CD4-positive, alpha-beta T cell (primary cell): ENCODE measurements at regions of chr18 and their contacts with region 1.

Region 1: GRCh38 chr18:712401-713134 is at the start of gene ENOSF1:
- DNase-seq: peak; percentile 55 to 91 (median 73)
- ATAC-seq: peak; percentile 73
- H3K4me3 ChIP-seq: peak within 1 kb of the TSS; percentile 78
- H3K4me3 Mint-ChIP-seq: peak within 1 kb of the TSS; percentile 95
- H3K27ac ChIP-seq: peak within 1 kb of the TSS; percentile 71 to 81
- H3K27ac Mint-ChIP-seq: peak within 1 kb of the TSS; percentile 92
- H3K4me1 ChIP-seq: peaks cover 27% of the 10 kb centered on the region
- H3K4me1 Mint-ChIP-seq: peaks cover 38% of the 10 kb centered on the region
- H3K27me3 ChIP-seq: no peaks in the 10 kb centered on the region
- H3K27me3 Mint-ChIP-seq: no peaks in the 10 kb centered on the region
- CTCF ChIP-seq: peak; percentile 49
- total RNA-seq, gene ENOSF1: 37.8 to 40.1 TPM

Region 2: GRCh38 chr18:596288-596881 is 116.2 kb before region 1 on chr18:
- CTCF ChIA-PET with region 1: no interaction called
- POLR2A ChIA-PET with region 1: no interaction called
- intact Hi-C with region 1: loop called in 1 of 2 experiments (anchors 1 kb)
- DNase-seq: peak in 3 of 14 experiments; percentile 68 to 84 (median 83)
- ATAC-seq: peak; percentile 69
- H3K4me3 ChIP-seq: no peak overlapping the region
- H3K4me3 Mint-ChIP-seq: peak overlapping the region; percentile 42
- H3K27ac ChIP-seq: no peak overlapping the region
- H3K27ac Mint-ChIP-seq: no peak overlapping the region
- H3K4me1 ChIP-seq: peaks cover 13% of the 10 kb centered on the region
- H3K4me1 Mint-ChIP-seq: peaks cover 10% of the 10 kb centered on the region
- H3K27me3 ChIP-seq: peaks cover 3 to 28% of the 10 kb centered on the region in 2 experiments
- H3K27me3 Mint-ChIP-seq: peaks cover 55% of the 10 kb centered on the region
- CTCF ChIP-seq: no peak

Region 3: DNA sequence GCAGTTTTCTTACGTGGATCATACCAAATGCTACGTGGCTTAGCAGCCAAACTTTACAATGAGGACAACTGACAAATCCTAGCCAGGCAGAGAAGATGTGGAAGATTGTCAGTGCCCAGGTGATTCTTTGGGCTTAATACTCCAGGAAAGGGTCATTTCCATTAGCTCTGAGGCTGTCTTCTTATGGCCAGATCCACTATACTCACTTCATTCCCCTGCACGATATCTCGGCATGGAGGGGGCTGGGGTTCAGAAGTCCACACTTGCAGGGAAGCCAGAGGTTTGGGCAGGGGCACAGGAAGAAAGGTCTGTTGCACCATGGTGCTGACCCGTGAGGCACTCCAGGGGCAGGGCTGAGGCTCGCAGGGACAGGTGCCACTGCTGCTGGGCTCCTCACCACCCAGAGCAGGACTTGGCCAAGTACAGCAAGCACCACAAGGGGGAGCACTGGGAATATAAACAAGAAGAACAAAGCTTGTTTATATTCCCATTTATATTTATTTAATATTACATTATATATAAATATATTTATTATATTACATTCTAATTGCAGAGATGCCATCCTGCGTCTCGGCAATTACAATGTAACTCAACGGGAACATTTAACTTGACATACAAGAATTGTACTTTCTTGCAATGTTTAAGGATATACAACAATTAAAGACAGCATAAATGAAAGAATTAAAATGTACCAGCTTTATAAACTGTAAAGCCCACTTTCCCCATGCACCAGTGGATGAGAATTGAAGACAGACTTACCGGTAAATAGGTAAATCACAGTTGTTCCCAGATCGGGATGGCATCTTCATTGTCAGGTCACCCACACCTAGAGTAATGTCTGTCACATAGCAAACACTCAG is 88.6 kb before region 1 on chr18:
- CTCF ChIA-PET with region 1: interaction called, 5 read pairs
- POLR2A ChIA-PET with region 1: no interaction called
- intact Hi-C with region 1: loop called in 1 of 2 experiments (anchors 5 kb)
- DNase-seq: peak; percentile 23 to 74 (median 44)
- ATAC-seq: peak; percentile 73
- H3K4me3 ChIP-seq: no peak overlapping the region
- H3K4me3 Mint-ChIP-seq: no peak overlapping the region
- H3K27ac ChIP-seq: no peak overlapping the region
- H3K27ac Mint-ChIP-seq: no peak overlapping the region
- H3K4me1 ChIP-seq: no peaks in the 10 kb centered on the region
- H3K4me1 Mint-ChIP-seq: no peaks in the 10 kb centered on the region
- H3K27me3 ChIP-seq: peaks cover 0 to 5% of the 10 kb centered on the region in 2 experiments
- H3K27me3 Mint-ChIP-seq: peaks cover 14% of the 10 kb centered on the region
- CTCF ChIP-seq: peak; percentile 70

Region 4: GRCh38 chr18:693466-694187 is 18.9 kb before region 1 on chr18:
- CTCF ChIA-PET with region 1: no interaction called
- POLR2A ChIA-PET with region 1: no interaction called
- intact Hi-C with region 1: no loop called
- DNase-seq: no peak
- ATAC-seq: no peak
- H3K4me3 ChIP-seq: no peak overlapping the region
- H3K4me3 Mint-ChIP-seq: no peak overlapping the region
- H3K27ac ChIP-seq: no peak overlapping the region
- H3K27ac Mint-ChIP-seq: no peak overlapping the region
- H3K4me1 ChIP-seq: no peaks in the 10 kb centered on the region
- H3K4me1 Mint-ChIP-seq: no peaks in the 10 kb centered on the region
- H3K27me3 ChIP-seq: no peaks in the 10 kb centered on the region
- H3K27me3 Mint-ChIP-seq: no peaks in the 10 kb centered on the region
- CTCF ChIP-seq: no peak

Region 5: GRCh38 chr18:812376-813171 is 100.0 kb after region 1 on chr18:
- CTCF ChIA-PET with region 1: no interaction called
- POLR2A ChIA-PET with region 1: interaction called, 11 read pairs
- intact Hi-C with region 1: loop called in 1 of 2 experiments (anchors 5 kb)
- DNase-seq: peak; percentile 51 to 88 (median 68)
- ATAC-seq: peak; percentile 66
- H3K4me3 ChIP-seq: peak overlapping the region; percentile 93
- H3K4me3 Mint-ChIP-seq: peak overlapping the region; percentile 90
- H3K27ac ChIP-seq: peak overlapping the region; percentile 93 to 95
- H3K27ac Mint-ChIP-seq: peak overlapping the region; percentile 94
- H3K4me1 ChIP-seq: peaks cover 30% of the 10 kb centered on the region
- H3K4me1 Mint-ChIP-seq: peaks cover 68% of the 10 kb centered on the region
- H3K27me3 ChIP-seq: no peaks in the 10 kb centered on the region
- H3K27me3 Mint-ChIP-seq: no peaks in the 10 kb centered on the region
- CTCF ChIP-seq: no peak

Region 6: DNA sequence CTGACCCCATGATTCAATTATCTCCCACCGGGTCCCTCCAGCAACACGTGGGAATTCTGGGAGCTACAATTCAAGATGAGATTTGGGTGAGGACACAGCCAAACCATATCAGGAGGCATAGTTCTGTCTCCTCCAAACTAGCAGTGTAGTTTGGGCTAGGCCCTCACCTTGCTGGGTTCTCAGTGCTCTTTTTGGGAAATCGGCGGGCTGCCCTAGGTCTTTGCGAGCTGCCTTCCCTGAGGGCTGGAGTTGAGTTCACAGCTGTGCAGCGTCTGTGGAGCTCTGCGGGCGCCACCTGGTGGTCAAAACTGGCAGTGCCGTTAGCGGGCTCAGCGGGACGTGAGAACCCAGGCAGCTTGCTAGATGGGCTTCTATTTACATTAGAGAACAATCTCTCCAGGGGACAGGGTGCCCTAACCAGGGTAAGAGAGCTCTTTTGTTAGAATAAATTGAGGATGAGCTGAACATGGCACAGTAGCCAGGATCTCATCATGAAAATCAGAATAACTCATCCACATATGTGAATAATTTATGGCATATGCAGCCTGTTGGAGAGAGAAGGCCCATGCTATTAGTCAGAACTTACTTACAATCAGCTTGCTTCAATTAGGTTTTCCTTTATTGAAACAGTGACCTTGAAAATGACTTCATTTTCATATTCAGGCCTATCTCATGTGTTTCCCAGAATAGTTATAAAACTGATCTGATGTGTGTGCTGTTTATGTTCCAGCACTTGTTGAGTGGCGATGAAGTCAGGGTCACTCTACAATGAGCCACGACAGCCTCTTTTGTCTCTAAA is 126.9 kb after region 1 on chr18:
- CTCF ChIA-PET with region 1: interaction called, 5 read pairs
- POLR2A ChIA-PET with region 1: interaction called, 4 read pairs
- intact Hi-C with region 1: loop called in 1 of 2 experiments (anchors 10 kb)
- DNase-seq: peak; percentile 70 to 94 (median 89)
- ATAC-seq: peak; percentile 97
- H3K4me3 ChIP-seq: no peak overlapping the region
- H3K4me3 Mint-ChIP-seq: no peak overlapping the region
- H3K27ac ChIP-seq: no peak overlapping the region
- H3K27ac Mint-ChIP-seq: no peak overlapping the region
- H3K4me1 ChIP-seq: peaks cover 3% of the 10 kb centered on the region
- H3K4me1 Mint-ChIP-seq: peaks cover 6% of the 10 kb centered on the region
- H3K27me3 ChIP-seq: no peaks in the 10 kb centered on the region
- H3K27me3 Mint-ChIP-seq: no peaks in the 10 kb centered on the region
- CTCF ChIP-seq: peak; percentile 91